GM13976 (cell line): ENCODE measurements at regions of chr11 and their contacts with region 1.

Region 1: DNA sequence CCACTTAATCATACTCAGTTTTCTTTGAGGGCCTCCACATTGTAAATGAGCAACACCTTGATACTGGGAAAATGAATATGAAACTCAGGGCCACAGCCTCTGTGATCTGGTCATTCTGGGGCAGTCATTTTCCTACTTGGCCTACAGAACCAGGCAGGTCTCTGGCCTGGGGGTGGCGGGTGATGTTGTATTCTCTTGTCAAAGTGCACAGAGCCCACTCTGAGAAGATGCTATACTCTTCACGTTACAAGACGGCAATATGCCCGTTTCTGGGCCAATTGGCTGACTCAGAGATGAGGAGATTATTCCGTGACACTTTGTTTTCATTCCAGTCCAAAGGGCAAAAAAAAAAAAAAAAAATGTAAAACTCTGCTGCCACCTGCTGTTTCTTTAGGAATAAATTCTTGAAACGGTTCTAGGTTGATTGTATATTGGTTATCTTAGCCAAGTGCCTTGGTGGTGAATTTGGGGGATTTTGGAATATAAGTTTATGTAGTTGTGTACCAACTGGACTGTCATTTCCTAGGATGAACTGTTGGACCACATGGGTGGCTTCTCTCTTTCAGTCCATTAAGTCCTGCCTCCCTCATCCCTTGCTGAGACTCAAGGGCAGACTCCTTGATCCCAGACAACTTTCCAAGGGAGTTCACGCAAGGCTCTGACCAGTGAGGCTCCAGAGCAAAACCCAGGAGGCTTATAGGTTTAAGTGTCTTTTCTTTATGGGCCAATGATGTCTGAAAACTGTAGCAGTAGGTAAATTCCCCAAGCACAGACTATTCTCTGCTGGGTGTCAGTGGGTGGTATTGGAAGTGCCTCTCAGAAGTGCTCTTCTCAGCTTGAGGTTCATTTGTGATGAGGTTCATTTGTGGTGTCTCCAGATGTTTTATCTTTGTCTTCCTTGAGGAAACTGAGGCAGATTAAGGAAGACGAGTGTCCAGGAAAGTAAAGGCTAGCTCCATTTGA is 18.2 kb downstream of the ADM start:
- DNase-seq: peak; percentile 55
- CTCF ChIP-seq: peak; percentile 28

Region 2: DNA sequence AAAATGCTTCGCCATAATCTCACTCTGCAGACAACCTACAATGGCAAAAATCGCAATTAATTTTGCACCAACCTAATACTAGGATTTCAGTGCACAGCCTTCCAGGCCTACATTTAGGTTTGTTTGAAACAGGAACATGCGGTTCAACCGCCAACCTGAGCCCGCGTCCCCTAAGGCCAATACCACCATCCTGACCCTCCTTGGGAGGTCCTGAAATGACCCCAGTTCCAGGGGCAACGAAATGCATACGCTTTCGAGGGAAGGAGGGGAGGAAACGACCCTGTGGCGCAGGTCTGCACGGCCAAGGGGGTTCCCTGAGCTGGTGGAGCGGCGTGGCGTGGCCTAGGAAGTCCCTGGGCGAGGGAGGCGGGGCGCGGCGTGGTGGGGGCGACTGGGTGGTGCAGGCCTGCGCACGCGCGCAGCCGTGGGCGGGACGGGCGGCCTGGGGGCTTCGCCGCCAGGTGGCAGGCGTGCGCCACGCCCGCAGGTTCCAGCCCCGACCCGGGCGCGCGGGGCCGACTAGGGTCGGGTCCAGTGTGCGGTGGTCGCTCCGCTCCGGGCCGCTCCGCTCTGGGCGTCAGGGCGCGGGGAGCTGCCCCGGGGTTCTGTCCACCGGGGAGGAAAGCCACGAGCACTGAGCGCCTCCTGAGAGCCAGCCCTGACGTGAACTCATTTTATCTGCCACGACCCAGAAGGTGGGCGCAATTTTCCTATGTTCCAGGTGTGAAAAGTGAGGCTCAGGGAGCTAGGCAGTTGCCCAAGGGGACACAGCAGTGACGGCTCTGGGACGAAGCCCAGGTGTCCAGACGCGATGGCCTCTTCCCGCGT is 565.1 kb before region 1 on chr11:
- in situ Hi-C with region 1: loop called (anchors 10 kb)
- DNase-seq: peak; percentile 97
- CTCF ChIP-seq: peak; percentile 91

Region 3: DNA sequence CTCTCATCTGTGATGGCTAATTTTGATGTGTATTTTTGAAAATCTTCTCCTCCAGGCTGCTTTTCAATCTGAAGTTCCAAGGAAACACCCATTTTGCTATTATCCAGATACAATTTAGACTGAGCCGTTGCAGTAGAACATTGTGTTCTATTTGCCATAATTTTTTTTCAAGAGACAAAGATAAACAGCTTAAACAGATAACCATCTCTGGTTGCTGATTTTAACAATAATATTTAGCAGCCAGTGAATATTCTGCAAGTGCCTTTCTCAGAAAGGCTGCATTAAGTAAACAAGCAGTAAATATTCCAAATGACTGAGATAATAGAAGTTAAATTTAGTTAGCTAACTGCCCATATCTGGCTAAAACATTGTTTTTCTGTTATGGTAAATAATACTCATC is 235.9 kb before region 1 on chr11:
- in situ Hi-C with region 1: no loop called
- DNase-seq: no peak
- CTCF ChIP-seq: no peak

Region 4: GRCh38 chr11:10604340-10604748 is 281.2 kb after region 1 on chr11:
- in situ Hi-C with region 1: no loop called
- DNase-seq: no peak
- CTCF ChIP-seq: no peak